PC-9 (cell line): ENCODE measurements at regions of chr11 and their contacts with region 1.

Region 1: DNA sequence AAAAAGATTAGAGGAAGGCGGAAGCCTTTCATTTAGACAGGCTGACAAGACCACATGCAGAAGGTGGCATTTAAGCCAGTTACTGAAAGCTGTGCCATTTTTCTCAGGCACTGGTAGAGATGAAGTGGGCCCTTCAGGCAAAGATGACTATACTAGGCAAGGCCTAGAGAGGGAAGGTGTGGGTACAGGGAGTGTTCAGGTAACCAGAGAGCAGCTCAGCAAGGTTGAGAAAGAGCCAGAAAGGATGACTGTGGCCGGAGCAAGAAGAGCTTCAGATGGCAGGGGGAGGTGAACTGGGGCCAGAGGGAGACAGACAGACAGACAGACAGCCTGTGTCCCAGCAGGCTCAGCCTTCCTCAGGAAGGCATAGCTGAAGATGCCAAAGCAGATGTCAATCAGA is 88.1 kb upstream of the NARS2 start:
- DNase-seq: no peak
- H3K4me3 ChIP-seq: no peak overlapping the region
- H3K27ac ChIP-seq: no peak overlapping the region
- H3K4me1 ChIP-seq: no peaks in the 10 kb centered on the region
- H3K27me3 ChIP-seq: peaks cover 66% of the 10 kb centered on the region
- CTCF ChIP-seq: no peak

Region 2: DNA sequence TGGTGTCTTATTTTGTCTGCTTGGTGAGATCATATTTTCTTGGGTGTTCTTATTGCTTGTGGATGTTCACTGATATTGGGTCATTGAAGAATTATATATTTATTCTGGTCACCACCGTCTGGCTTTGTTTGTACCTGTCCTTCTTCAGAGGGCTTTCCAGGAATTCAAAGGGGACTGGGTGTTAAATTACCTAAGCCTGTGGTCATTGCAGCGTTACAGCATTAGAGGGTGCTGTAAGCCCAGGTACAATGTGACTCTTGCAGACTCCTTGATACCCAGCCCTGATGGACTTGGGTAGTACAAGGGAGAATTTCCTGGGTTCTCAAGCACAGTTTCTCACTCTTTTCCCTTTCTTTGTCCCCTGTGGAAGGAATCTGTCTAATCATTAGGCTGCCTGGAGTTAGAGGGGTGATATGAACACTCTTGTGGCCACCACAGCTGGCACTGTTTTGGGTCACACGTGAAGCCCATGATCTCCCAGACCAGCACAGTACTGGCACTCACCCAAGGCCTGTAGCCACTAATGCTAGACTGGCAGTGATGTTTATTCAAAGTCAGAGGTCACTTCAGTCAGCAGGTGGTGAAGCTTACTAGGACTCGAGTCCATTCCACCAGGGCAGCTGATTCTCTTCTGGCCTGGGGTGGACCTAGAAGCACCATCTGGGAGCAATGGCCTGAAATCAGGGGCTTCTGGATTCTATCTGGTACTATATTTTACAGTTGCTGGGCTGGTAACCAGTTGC is 32.1 kb before region 1 on chr11:
- CTCF ChIA-PET with region 1: no interaction called
- POLR2A ChIA-PET with region 1: no interaction called
- intact Hi-C with region 1: loop called (anchors 1 kb)
- DNase-seq: no peak
- H3K4me3 ChIP-seq: no peak overlapping the region
- H3K27ac ChIP-seq: no peak overlapping the region
- H3K4me1 ChIP-seq: no peaks in the 10 kb centered on the region
- H3K27me3 ChIP-seq: peaks cover 80% of the 10 kb centered on the region
- CTCF ChIP-seq: peak; percentile 29

Region 3: GRCh38 chr11:79062814-79063762 is 400.3 kb after region 1 on chr11:
- CTCF ChIA-PET with region 1: no interaction called
- POLR2A ChIA-PET with region 1: no interaction called
- intact Hi-C with region 1: no loop called
- DNase-seq: no peak
- H3K4me3 ChIP-seq: no peak overlapping the region
- H3K27ac ChIP-seq: no peak overlapping the region
- H3K4me1 ChIP-seq: no peaks in the 10 kb centered on the region
- H3K27me3 ChIP-seq: peaks cover 43% of the 10 kb centered on the region
- CTCF ChIP-seq: peak; percentile 58